PC-9 (cell line): ENCODE measurements at regions of chr7 and their contacts with region 1.

Region 1: GRCh38 chr7:84188786-84189405 is 5.7 kb downstream of the SEMA3A start:
- DNase-seq: no peak
- H3K4me3 ChIP-seq: no peak overlapping the region
- H3K27ac ChIP-seq: peak overlapping the region; percentile 81
- H3K4me1 ChIP-seq: peaks cover 18% of the 10 kb centered on the region
- H3K27me3 ChIP-seq: no peaks in the 10 kb centered on the region
- CTCF ChIP-seq: peak; percentile 37; the same call in 1 of the 2 replicates

Region 2: GRCh38 chr7:83936056-83936708 is 252.7 kb before region 1 on chr7:
- CTCF ChIA-PET with region 1: interaction called, 4 read pairs
- POLR2A ChIA-PET with region 1: no interaction called
- intact Hi-C with region 1: loop called (anchors 1 kb)
- DNase-seq: peak; percentile 49 to 72
- H3K4me3 ChIP-seq: no peak overlapping the region
- H3K27ac ChIP-seq: no peak overlapping the region
- H3K4me1 ChIP-seq: no peaks in the 10 kb centered on the region
- H3K27me3 ChIP-seq: no peaks in the 10 kb centered on the region
- CTCF ChIP-seq: peak; percentile 91

Region 3: GRCh38 chr7:83976295-83976694 is 212.6 kb before region 1 on chr7:
- CTCF ChIA-PET with region 1: no interaction called
- POLR2A ChIA-PET with region 1: interaction called, 3 read pairs
- intact Hi-C with region 1: loop called (anchors 1 kb)
- DNase-seq: peak in 1 of 2 experiments; percentile 35
- H3K4me3 ChIP-seq: no peak overlapping the region
- H3K27ac ChIP-seq: no peak overlapping the region
- H3K4me1 ChIP-seq: no peaks in the 10 kb centered on the region
- H3K27me3 ChIP-seq: no peaks in the 10 kb centered on the region
- CTCF ChIP-seq: peak; percentile 83

Region 4: DNA sequence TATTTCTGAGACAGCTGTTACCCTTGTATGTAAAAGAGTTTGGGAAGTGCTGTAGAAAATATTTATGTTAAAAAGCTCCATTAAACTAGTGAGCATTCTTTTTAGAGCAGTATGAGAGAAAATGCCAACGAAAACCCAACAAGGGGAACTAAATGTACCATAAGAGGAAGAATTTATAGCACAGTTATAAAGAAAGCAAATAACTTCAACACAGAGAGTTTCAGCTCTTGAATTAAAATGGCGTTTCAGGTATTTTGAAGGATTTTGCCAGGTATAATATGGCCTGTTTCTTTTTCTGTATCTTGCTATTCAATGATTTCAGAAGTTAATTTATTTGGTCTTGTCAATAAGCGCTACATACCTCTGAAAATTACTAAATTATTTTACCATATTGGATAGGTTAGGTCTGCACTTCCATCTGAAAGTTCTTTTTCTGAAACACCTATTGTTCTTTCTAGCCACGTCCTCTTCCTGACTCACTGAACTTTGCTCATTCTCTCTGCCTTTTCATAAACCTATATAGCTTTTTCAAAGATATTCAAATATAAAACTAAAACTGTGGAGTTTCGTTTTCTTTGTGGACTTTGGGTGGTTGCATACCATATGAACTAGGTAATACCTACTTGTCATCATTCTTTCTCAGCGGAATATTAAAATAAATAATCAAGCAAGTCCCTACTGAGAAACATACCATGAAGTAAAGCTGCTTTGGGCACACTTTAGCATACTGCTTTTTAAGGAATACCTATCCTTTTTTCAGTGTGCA is 130.4 kb before region 1 on chr7:
- CTCF ChIA-PET with region 1: no interaction called
- POLR2A ChIA-PET with region 1: no interaction called
- intact Hi-C with region 1: loop called (anchors 2 kb)
- DNase-seq: no peak
- H3K4me3 ChIP-seq: no peak overlapping the region
- H3K27ac ChIP-seq: 0 out of 2 replicates have a peak overlapping the region, but pooled peaks have one; percentile 1
- H3K4me1 ChIP-seq: peaks cover 28% of the 10 kb centered on the region
- H3K27me3 ChIP-seq: no peaks in the 10 kb centered on the region
- CTCF ChIP-seq: no peak

Region 5: DNA sequence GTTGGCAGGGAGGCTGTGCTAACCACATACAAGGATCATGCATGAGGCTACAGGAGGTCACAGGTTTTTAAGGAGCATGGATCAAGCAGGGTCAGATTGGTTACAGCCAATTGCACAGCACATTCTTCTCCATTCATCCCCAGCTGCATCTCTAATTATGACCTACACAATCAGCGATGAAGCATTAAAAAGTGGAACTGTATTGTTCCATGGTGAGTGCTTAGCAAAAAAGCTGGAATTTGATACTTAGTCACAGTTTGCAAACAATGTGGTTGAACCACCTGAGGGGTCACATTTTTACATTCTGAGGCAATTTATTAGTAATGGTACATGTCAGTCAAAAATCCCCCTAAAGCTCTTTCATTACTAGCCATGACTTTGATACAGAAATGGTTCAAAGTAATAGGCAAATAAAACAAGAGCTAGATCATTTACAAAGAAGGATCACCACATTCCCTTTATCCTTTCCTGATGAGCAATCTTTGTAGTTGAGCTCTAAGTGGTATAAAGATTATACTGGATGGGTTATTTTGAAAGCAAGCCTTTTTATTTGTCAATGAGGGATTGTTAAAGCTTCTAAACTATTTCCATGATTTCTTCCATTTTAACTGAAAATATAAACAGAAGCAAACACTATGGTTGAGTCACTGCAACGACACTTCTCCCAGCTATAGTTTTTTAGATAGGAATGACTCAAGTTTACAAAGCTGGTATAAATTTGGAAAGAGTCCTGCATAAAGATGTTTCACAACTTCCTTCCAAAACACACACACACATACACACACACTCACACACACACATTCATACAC is 223.5 kb after region 1 on chr7:
- CTCF ChIA-PET with region 1: no interaction called
- POLR2A ChIA-PET with region 1: no interaction called
- intact Hi-C with region 1: loop called (anchors 1 kb)
- DNase-seq: peak; percentile 44 to 95
- H3K4me3 ChIP-seq: no peak overlapping the region
- H3K27ac ChIP-seq: peak overlapping the region; percentile 93
- H3K4me1 ChIP-seq: peaks cover 28% of the 10 kb centered on the region
- H3K27me3 ChIP-seq: no peaks in the 10 kb centered on the region
- CTCF ChIP-seq: no peak

Region 6: DNA sequence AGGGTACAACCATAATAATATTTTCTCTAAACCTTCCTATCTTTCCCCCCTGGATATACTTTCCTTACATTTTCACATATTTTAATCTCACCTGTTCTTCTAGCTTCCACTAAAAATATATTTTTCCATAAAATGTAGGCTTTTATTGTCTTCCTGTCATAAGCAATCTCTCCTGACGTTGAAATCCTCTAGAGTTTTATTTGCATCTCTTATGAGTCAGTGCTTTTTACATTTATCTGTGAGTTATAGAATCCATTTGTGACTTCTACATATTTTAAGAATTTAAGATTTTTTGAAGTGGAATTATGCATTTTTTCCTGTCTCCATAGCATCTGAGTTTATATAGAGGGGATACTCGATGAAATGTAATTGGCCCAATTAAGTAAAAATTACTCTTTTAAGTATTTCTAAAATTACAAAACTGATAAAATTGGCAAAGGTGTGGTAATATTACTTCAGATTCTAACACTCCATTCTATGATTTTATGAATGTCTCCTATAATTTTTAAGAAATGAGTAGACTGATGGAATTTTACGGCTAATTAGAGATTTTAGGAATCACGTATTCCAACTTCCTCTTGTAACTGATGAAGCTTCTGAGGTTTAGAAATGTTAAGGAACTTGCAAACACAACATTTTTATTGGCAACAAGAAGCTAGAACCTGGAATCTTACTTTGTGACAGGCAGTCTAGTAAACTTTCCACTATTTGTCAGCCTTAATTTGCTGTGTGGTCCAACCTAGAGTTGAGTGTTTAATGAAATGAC is 428.6 kb after region 1 on chr7:
- CTCF ChIA-PET with region 1: interaction called, 11 read pairs
- POLR2A ChIA-PET with region 1: no interaction called
- intact Hi-C with region 1: no loop called
- DNase-seq: no peak
- H3K4me3 ChIP-seq: no peak overlapping the region
- H3K27ac ChIP-seq: no peak overlapping the region
- H3K4me1 ChIP-seq: no peaks in the 10 kb centered on the region
- H3K27me3 ChIP-seq: no peaks in the 10 kb centered on the region
- CTCF ChIP-seq: no peak

Region 7: DNA sequence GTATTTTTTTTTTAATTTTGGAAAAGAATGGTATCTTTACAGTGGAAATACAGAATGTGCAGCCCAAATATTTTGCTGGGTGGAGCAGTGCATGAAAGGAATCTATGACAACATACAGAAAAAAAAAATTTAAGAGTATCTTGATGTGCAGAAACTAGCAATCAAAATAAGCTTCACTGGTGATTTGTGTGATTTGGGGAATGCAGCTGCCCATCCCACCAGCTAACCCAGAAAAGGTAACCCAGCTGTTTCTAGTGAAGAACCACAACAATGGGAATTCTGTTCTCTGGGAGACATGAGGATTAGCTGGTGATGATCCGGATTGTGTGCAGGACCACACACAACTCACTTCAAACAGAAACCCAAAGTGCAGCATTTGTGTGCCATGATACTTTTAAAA is 622.5 kb after region 1 on chr7:
- CTCF ChIA-PET with region 1: no interaction called
- POLR2A ChIA-PET with region 1: no interaction called
- intact Hi-C with region 1: no loop called
- DNase-seq: no peak
- H3K4me3 ChIP-seq: no peak overlapping the region
- H3K27ac ChIP-seq: no peak overlapping the region
- H3K4me1 ChIP-seq: no peaks in the 10 kb centered on the region
- H3K27me3 ChIP-seq: no peaks in the 10 kb centered on the region
- CTCF ChIP-seq: no peak

Region 8: DNA sequence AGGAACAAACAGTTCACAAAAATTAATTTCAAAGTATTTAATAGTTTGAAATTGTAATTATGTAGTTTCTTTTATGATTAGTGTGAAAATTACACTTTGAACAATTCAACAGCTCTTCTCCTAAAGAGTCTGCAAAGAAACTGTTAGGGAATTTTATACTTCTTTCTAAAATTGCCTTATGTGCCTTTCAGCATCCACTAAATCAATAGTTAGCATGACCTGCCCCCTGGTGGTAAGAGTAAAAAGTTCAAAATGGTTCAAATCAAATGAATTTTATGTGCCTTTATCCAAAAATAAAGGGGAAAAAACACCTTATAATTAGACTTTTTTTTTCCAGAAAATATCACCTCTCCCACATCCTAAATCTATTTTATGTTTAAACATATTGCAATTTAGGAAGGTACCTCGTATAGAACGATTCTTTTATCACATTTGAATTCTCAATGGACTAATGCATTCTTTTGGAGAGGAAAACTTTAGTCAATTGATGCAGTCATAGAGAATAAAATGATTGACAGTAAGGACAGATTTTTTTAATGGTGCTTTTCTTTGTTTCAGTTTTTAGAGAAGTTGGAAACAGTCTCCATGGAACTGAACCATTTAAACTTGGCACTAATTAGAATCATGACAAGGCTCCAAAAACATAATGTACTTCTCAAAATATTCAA is 834.3 kb after region 1 on chr7:
- CTCF ChIA-PET with region 1: no interaction called
- POLR2A ChIA-PET with region 1: no interaction called
- intact Hi-C with region 1: loop called (anchors 2 kb)
- DNase-seq: peak in 1 of 2 experiments; percentile 20
- H3K4me3 ChIP-seq: no peak overlapping the region
- H3K27ac ChIP-seq: no peak overlapping the region
- H3K4me1 ChIP-seq: no peaks in the 10 kb centered on the region; the same call in 1 of the 2 replicates
- H3K27me3 ChIP-seq: no peaks in the 10 kb centered on the region
- CTCF ChIP-seq: peak; percentile 87